ENCODE measurements at regions of chr16 and their contacts with region 1.

Region 1: DNA sequence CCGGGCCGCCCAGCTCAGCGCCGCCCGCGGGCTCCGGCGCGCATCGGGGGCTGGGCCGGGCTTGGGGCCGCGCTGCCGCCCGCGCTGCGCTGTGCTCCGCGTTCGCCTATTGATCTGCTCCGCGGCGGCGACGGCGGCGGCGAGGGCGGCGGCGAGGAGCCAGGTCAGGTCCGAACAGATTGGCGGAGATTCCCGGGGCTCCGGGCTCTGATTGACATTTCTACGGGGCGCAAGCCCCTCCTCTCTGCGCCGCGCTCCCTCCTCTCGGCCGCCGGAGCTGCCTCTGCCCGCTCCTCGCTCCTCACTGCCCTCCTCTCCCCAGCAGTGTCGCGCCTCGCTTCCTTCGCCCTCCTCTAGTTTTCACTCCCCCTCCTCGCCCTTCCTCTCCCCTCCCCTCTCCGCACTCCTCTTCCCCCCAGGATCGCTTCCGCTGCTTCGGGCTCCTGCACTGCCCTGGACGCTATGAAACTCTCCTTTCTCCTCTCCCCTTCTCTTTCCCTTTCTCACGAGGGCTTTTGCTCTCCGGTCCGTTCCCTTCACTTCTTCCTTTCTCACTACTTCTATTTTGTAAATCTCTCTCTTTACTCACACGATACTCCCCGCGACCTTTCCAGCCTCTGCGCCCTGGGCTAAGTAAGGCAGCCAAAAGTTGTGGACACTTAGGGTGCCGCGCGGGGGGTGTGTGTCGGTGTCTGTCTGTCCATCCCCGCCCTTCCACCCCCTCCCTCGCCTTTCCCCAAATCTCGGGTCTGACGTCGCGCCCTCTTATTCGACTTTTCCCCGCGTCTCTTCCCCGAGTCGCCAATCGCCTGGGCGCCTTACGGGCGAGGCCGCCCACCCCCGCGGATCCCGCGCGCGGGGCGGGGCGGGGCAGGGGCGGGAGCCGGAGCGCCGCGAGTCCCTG is at the start of gene IRX3:
- DNase-seq: peak; percentile 94
- H3K4me3 ChIP-seq: peak within 1 kb of the TSS; percentile 66 to 85 (median 80)
- H3K27ac ChIP-seq: peak within 1 kb of the TSS; percentile 74
- H3K4me1 ChIP-seq: peaks cover 30% of the 10 kb centered on the region
- H3K27me3 ChIP-seq: no peaks in the 10 kb centered on the region
- CTCF ChIP-seq: no peak
- total RNA-seq, gene IRX3: 7.2 to 15.5 TPM

Region 2: GRCh38 chr16:53892155-53892554 is 394.2 kb before region 1 on chr16:
- CTCF ChIA-PET with region 1: no interaction called
- dilution Hi-C with region 1: no loop called
- in situ Hi-C with region 1: no loop called
- intact Hi-C with region 1: loop called (anchors 1 kb)
- DNase-seq: peak; percentile 51
- H3K4me3 ChIP-seq: no peak overlapping the region
- H3K27ac ChIP-seq: peak overlapping the region; percentile 5
- H3K4me1 ChIP-seq: peaks cover 26% of the 10 kb centered on the region
- H3K27me3 ChIP-seq: no peaks in the 10 kb centered on the region
- CTCF ChIP-seq: peak; percentile 53 to 69

Region 3: DNA sequence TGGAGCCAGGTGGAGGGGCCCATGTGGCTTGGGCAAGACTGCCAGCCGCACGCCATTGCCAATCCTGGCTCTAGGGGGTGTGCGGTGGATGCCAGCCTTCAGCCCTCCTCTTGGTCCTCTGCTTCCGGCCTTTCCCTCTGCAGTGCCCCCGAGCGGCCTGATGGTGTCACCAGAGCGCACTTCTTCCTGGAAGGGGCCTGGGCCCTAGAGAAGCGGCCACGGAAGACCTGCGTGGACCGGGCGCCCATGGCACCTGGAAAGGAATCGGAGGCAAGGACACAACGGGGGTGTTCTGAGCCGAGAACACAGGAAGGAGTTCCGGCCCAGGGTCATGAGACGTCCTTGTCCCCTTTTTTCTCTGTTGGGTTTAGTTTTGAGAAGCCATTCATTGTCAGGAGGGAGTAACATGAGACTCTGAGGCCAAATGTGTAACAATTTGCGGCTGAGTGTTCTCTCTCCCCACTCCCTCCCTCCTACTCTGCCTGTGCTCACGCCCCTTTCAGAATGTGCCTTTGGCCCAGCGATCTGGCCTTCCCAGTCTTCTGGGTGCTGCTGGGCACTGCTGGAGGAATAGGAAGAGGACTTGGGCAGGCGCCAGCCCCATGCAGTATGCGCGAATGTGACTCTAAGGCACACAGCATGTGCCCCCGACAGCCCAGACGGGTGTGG is 92.5 kb before region 1 on chr16:
- CTCF ChIA-PET with region 1: no interaction called
- dilution Hi-C with region 1: no loop called
- in situ Hi-C with region 1: no loop called
- intact Hi-C with region 1: loop called (anchors 5 kb)
- DNase-seq: peak; percentile 58
- H3K4me3 ChIP-seq: no peak overlapping the region
- H3K27ac ChIP-seq: no peak overlapping the region
- H3K4me1 ChIP-seq: peaks cover 12% of the 10 kb centered on the region
- H3K27me3 ChIP-seq: no peaks in the 10 kb centered on the region
- CTCF ChIP-seq: peak; percentile 84 to 93

Region 4: GRCh38 chr16:54341892-54342776 is 55.8 kb after region 1 on chr16:
- CTCF ChIA-PET with region 1: no interaction called
- dilution Hi-C with region 1: no loop called
- in situ Hi-C with region 1: no loop called
- intact Hi-C with region 1: no loop called
- DNase-seq: peak; percentile 66
- H3K4me3 ChIP-seq: no peak overlapping the region
- H3K27ac ChIP-seq: peak overlapping the region; percentile 11
- H3K4me1 ChIP-seq: peaks cover 19% of the 10 kb centered on the region
- H3K27me3 ChIP-seq: no peaks in the 10 kb centered on the region
- CTCF ChIP-seq: no peak

Region 5: DNA sequence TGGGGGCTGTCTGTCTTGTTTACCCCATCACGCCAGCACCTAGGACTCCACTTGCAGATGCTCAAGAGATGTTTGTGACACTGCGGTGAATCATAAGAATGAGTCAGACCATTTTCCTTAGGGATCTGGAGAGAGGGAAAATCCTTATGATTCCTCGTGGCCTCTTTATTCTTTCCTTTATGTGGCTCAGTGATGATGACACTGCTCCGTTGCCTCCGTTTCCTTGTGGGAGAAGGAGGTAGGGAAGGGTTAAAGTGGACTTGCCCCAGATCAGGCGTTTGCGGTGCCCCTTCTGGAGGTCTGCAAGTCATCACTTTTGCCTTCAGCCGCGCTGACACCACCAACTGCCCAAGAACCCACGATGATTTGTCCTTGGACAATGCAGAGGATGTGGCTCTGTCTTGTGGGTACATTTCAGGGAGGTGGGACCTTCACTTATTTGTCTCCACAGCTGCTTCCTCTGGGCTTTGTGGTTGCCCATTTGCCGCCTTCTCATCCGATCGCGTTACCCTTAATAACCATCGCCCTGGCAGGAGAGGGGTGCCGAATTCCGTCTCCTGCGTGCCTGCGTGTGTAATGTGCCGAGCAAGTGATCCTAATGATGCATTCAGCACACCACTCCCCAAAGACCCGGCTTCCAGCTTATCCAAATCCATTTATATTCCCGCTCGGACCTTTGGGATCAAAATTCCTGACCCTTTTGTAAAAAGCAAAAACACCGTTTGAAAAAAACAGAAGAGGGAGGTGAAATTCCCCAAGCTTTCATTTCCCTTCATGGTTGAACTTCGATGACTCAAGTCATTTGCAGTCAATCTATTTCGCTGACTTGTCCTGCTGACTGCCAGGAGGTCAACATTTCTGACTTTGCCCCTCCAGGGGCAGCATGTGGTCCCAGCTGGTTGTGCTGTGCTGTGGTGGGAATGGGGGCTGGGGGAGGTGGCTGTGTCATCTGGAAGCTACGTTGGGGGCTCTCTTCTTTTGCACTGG is 87.5 kb after region 1 on chr16:
- CTCF ChIA-PET with region 1: no interaction called
- dilution Hi-C with region 1: no loop called
- in situ Hi-C with region 1: no loop called
- intact Hi-C with region 1: no loop called
- DNase-seq: peak; percentile 30
- H3K4me3 ChIP-seq: no peak overlapping the region
- H3K27ac ChIP-seq: no peak overlapping the region
- H3K4me1 ChIP-seq: no peaks in the 10 kb centered on the region
- H3K27me3 ChIP-seq: no peaks in the 10 kb centered on the region
- CTCF ChIP-seq: no peak

Region 6: GRCh38 chr16:54602666-54603065 is 316.3 kb after region 1 on chr16:
- CTCF ChIA-PET with region 1: no interaction called
- dilution Hi-C with region 1: no loop called
- in situ Hi-C with region 1: no loop called
- intact Hi-C with region 1: no loop called
- DNase-seq: no peak
- H3K4me3 ChIP-seq: no peak overlapping the region
- H3K27ac ChIP-seq: no peak overlapping the region
- H3K4me1 ChIP-seq: no peaks in the 10 kb centered on the region
- H3K27me3 ChIP-seq: peaks cover 4% of the 10 kb centered on the region
- CTCF ChIP-seq: no peak

Region 7: DNA sequence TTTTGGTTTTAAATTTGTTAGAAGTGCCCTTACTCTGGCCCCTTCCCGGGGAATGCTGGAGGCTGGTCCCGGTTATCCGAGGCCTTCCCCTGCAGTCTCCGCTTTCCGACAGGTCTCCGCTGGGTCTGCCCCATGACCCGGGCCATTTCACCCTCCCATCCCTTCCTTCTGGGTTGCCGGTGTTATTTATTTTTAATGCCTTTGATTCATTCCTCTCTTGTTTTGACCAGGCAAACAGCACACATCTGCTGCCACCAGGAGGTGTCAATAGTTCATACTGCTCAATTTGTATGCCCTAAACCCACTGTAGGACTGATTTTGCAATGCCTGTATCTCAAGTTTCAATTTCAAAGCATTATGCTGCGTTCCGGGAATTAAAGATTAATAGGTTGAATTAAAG is 531.1 kb after region 1 on chr16:
- CTCF ChIA-PET with region 1: no interaction called
- dilution Hi-C with region 1: no loop called
- in situ Hi-C with region 1: loop called in 1 of 2 experiments (anchors 25 kb)
- intact Hi-C with region 1: loop called (anchors 2 kb)
- DNase-seq: peak; percentile 59
- H3K4me3 ChIP-seq: no peak overlapping the region
- H3K27ac ChIP-seq: no peak overlapping the region
- H3K4me1 ChIP-seq: peaks cover 2% of the 10 kb centered on the region
- H3K27me3 ChIP-seq: no peaks in the 10 kb centered on the region
- CTCF ChIP-seq: peak; percentile 56 to 83

Region 8: DNA sequence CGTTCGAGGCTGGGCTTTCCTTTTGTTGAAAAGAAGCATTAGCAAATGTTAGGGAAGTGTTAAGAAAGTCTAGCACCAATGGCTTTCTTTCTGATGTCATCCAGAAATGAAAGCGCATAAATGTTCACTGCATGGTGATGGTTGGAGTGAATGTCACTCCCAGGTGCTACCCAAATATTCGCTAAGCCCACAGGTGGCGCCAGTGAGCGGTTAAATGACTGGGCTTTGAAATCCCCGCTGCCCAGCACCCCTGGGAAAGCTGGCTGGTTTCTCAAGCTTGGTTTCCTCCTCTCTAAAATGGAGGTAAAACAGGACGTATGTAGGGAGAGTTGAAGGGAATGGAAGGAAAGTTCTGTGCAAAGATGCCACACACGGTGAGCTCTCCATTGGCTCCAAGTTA is 748.7 kb after region 1 on chr16:
- CTCF ChIA-PET with region 1: no interaction called
- dilution Hi-C with region 1: no loop called
- in situ Hi-C with region 1: no loop called
- intact Hi-C with region 1: loop called (anchors 10 kb)
- DNase-seq: peak; percentile 25
- H3K4me3 ChIP-seq: no peak overlapping the region
- H3K27ac ChIP-seq: no peak overlapping the region
- H3K4me1 ChIP-seq: peaks cover 12% of the 10 kb centered on the region
- H3K27me3 ChIP-seq: peaks cover 4% of the 10 kb centered on the region
- CTCF ChIP-seq: peak; percentile 47 to 63

Measured in mammary epithelial cell (primary cell).